ENCODE measurements at regions of chr11 and their contacts with region 1.

Region 1: GRCh38 chr11:9613118-9613829 is 39.8 kb downstream of the WEE1 start:
- DNase-seq: peak; percentile 78 to 87 (median 85)
- H3K4me3 ChIP-seq: peak overlapping the region; percentile 36 to 84 (median 67)
- H3K4me3 Mint-ChIP-seq: peak overlapping the region; percentile 93 to 100
- H3K27ac ChIP-seq: peak overlapping the region; percentile 55 to 77
- H3K27ac Mint-ChIP-seq: peak overlapping the region; percentile 86 to 96 (median 92)
- H3K4me1 ChIP-seq: peaks cover 12 to 33% of the 10 kb centered on the region in 2 donors
- H3K4me1 Mint-ChIP-seq: peaks cover 25% of the 10 kb centered on the region
- H3K27me3 ChIP-seq: no peaks in the 10 kb centered on the region
- H3K27me3 Mint-ChIP-seq: peaks cover 0 to 6% (median 4%) of the 10 kb centered on the region in 3 donors
- CTCF ChIP-seq: peak; percentile 87

Region 2: GRCh38 chr11:9534791-9535781 is 78.2 kb before region 1 on chr11:
- intact Hi-C with region 1: loop called in 1 of 2 experiments (anchors 5 kb)
- DNase-seq: peak; percentile 77 to 91 (median 86)
- H3K4me3 ChIP-seq: no peak overlapping the region
- H3K4me3 Mint-ChIP-seq: no peak overlapping the region
- H3K27ac ChIP-seq: peak overlapping the region in 1 of 2 donors; percentile 2
- H3K27ac Mint-ChIP-seq: peak overlapping the region in 6 of 7 donors; percentile 14 to 68 (median 56)
- H3K4me1 ChIP-seq: peaks cover 8 to 11% of the 10 kb centered on the region in 2 donors
- H3K4me1 Mint-ChIP-seq: peaks cover 10% of the 10 kb centered on the region
- H3K27me3 ChIP-seq: no peaks in the 10 kb centered on the region
- H3K27me3 Mint-ChIP-seq: peaks cover 2 to 5% (median 2%) of the 10 kb centered on the region in 3 donors
- CTCF ChIP-seq: peak; percentile 94

Region 3: GRCh38 chr11:9573052-9573774 is 40.1 kb before region 1 on chr11 and contains the start of gene WEE1:
- intact Hi-C with region 1: loop called in 1 of 2 experiments (anchors 2 kb)
- DNase-seq: peak; percentile 91 to 93 (median 92)
- H3K4me3 ChIP-seq: peak within 1 kb of the TSS; percentile 74 to 93 (median 78)
- H3K4me3 Mint-ChIP-seq: peak within 1 kb of the TSS; percentile 97 to 98
- H3K27ac ChIP-seq: peak within 1 kb of the TSS; percentile 83
- H3K27ac Mint-ChIP-seq: peak within 1 kb of the TSS; percentile 60 to 93 (median 88)
- H3K4me1 ChIP-seq: peaks cover 10 to 27% of the 10 kb centered on the region in 2 donors
- H3K4me1 Mint-ChIP-seq: peaks cover 38% of the 10 kb centered on the region
- H3K27me3 ChIP-seq: no peaks in the 10 kb centered on the region
- H3K27me3 Mint-ChIP-seq: peaks cover 0 to 3% (median 0%) of the 10 kb centered on the region in 3 donors
- CTCF ChIP-seq: no peak
- polyA plus RNA-seq, gene WEE1: 0.05 to 0.41 (median 0.22) TPM

Region 4: DNA sequence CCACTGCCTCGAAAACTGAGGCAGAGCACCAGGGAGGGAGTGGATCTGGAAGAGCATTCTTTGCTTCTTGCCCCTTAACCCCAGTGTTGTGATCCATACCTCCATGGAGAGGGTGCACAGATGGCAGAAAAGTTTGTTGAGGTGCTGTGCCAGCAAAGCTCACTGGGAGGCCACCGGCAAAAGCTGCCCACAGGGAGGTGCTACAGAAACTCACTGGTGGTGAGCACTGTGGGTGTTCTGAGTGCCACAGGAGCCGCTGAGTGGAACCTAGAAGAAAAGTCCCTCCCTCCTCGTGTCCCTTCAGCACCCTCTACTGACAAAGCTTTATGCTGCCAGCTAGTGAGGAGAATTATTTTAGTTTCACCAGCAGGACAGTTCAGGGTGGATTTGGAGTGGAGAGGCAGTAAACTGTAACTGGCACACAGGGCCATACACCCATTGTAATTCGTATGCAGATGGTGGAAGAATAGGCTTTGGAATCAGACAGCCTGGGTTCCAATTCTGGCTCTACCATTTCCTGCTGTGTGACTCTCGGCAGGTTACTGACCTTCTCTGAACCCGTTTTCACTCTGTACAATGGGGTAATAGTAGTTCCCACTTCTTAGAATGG is 135.2 kb after region 1 on chr11:
- intact Hi-C with region 1: loop called (anchors 2 to 10 kb)
- DNase-seq: peak; percentile 57 to 66 (median 63)
- H3K4me3 ChIP-seq: no peak overlapping the region
- H3K4me3 Mint-ChIP-seq: no peak overlapping the region
- H3K27ac ChIP-seq: no peak overlapping the region
- H3K27ac Mint-ChIP-seq: peak overlapping the region in 1 of 7 donors; percentile 43
- H3K4me1 ChIP-seq: peaks cover 17 to 20% of the 10 kb centered on the region in 2 donors
- H3K4me1 Mint-ChIP-seq: peaks cover 30% of the 10 kb centered on the region
- H3K27me3 ChIP-seq: no peaks in the 10 kb centered on the region
- H3K27me3 Mint-ChIP-seq: no peaks in the 10 kb centered on the region
- CTCF ChIP-seq: peak; percentile 75

Region 5: GRCh38 chr11:9757809-9758636 is 144.7 kb after region 1 on chr11:
- intact Hi-C with region 1: loop called in 1 of 2 experiments (anchors 10 kb)
- DNase-seq: peak; percentile 78 to 92 (median 84)
- H3K4me3 ChIP-seq: peak overlapping the region; percentile 50 to 82 (median 66)
- H3K4me3 Mint-ChIP-seq: peak overlapping the region; percentile 76 to 91
- H3K27ac ChIP-seq: peak overlapping the region in 1 of 2 donors; percentile 75
- H3K27ac Mint-ChIP-seq: peak overlapping the region; percentile 38 to 91 (median 79)
- H3K4me1 ChIP-seq: peaks cover 19 to 24% of the 10 kb centered on the region in 2 donors
- H3K4me1 Mint-ChIP-seq: peaks cover 41% of the 10 kb centered on the region
- H3K27me3 ChIP-seq: no peaks in the 10 kb centered on the region
- H3K27me3 Mint-ChIP-seq: peaks cover 5 to 8% (median 7%) of the 10 kb centered on the region in 3 donors
- CTCF ChIP-seq: peak; percentile 92